ENCODE measurements at regions of chr10 and their contacts with region 1.

Region 1: GRCh38 chr10:123154092-123154921 is at the start of gene BUB3:
- DNase-seq: peak; percentile 98
- H3K4me3 Mint-ChIP-seq: peak within 1 kb of the TSS; percentile 97
- H3K27ac Mint-ChIP-seq: peak within 1 kb of the TSS; percentile 100
- H3K4me1 Mint-ChIP-seq: peaks cover 71% of the 10 kb centered on the region
- H3K27me3 Mint-ChIP-seq: peaks cover 3% of the 10 kb centered on the region
- total RNA-seq, gene BUB3: 293 to 307 TPM

Region 2: DNA sequence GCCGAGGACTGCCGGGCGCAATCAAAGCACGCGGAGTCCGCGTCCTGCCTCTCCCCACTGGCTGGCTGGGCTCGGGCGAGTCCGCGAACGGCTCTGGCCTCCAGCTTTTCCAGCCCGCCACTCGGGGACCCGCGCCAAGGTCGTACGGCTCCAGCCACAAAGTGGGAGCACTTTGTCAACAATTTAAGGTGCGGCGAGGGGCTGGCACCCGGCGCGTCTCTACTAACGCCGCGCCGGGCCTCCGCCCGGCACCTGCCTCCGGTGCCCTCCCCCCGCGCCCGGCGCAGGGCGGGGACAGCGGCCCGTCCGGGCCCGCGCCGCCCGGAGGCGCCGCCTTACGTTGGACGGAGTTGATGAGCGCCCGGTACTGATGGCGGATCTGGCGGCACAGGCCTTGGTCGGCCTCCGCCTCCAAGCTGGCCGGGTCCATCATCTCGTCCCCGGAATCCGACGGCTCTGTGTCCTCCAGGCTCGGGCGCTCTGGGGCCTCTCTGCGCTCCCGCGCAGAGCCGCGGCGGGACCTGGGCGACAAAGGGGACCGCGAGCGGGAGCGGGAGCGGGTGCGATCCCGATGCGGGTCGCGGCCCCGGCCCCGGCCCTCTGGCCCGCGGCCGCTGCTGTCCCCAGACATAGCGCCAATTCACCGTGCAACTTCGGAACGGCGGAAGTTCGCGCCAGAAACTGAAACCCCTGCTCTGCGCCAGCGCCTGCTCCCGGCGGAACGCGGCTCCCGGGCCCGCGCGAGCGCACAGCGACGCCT is 1179.6 kb before region 1 on chr10 and contains the start of gene NSMCE4A:
- CTCF ChIA-PET with region 1: no interaction called
- intact Hi-C with region 1: loop called (anchors 10 kb)
- DNase-seq: peak; percentile 76
- H3K4me3 Mint-ChIP-seq: peak within 1 kb of the TSS; percentile 76
- H3K27ac Mint-ChIP-seq: no peak within 1 kb of the TSS
- H3K4me1 Mint-ChIP-seq: peaks cover 24% of the 10 kb centered on the region
- H3K27me3 Mint-ChIP-seq: no peaks in the 10 kb centered on the region
- total RNA-seq, gene NSMCE4A: 47.5 to 48.8 TPM

Region 3: DNA sequence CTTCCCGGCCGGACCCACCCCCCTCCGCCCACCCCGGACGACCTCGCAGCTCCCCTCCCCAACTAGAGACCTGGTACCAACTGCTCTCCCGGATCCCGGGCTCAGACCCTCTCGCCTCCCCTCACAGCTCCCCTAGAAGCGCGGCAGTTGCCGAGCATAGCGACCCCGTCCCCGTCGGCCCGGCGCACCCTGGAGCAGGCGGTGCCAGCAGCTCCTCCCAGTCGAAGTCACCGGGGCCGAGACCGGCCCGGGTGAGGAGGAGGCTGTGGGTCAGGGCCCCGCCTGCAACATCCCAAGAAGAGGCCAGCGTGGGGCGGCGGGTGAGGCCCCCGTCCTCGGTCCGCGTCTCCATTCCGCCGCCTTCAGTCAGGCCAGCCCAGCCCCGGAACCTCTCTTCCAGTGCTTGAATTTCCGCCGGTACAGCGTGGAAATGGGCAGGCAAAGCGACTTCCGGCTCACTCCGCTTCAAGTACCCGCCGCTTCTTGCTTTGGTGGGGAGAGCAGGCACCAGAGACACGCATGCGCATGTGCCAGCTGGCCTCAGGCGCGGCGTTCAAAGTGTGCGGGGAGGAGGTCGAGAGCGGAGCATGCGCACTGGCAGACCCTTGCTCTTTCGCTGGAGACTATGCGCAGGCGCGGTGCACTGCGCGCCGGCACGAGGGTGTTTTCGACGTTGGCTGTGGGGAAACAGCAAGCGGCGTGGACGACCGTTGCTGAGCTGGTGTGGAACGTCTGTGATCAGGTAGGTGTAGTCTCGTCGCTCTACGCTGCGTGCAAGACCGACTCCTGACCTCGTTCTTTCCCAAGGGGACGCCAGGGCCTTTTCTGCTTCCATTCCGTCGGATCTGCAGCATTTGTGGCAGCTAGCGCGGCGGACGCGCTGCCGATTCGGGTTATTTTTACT is 200.2 kb before region 1 on chr10 and contains the start of gene C10orf88:
- CTCF ChIA-PET with region 1: no interaction called
- intact Hi-C with region 1: loop called (anchors 1 kb)
- DNase-seq: peak; percentile 97
- H3K4me3 Mint-ChIP-seq: peak within 1 kb of the TSS; percentile 81
- H3K27ac Mint-ChIP-seq: peak within 1 kb of the TSS; percentile 82
- H3K4me1 Mint-ChIP-seq: peaks cover 28% of the 10 kb centered on the region
- H3K27me3 Mint-ChIP-seq: no peaks in the 10 kb centered on the region
- total RNA-seq, gene C10orf88: 4.2 to 5.2 TPM

Region 4: GRCh38 chr10:123132576-123133477 is 21.5 kb before region 1 on chr10:
- CTCF ChIA-PET with region 1: interaction called, 18 read pairs
- intact Hi-C with region 1: loop called (anchors 1 kb)
- DNase-seq: peak; percentile 94
- H3K4me3 Mint-ChIP-seq: peak overlapping the region; percentile 44
- H3K27ac Mint-ChIP-seq: peak overlapping the region; percentile 2
- H3K4me1 Mint-ChIP-seq: peaks cover 29% of the 10 kb centered on the region
- H3K27me3 Mint-ChIP-seq: peaks cover 75% of the 10 kb centered on the region

Region 5: GRCh38 chr10:123301077-123301857 is 147.0 kb after region 1 on chr10:
- CTCF ChIA-PET with region 1: no interaction called
- intact Hi-C with region 1: no loop called
- DNase-seq: no peak
- H3K4me3 Mint-ChIP-seq: no peak overlapping the region
- H3K27ac Mint-ChIP-seq: no peak overlapping the region
- H3K4me1 Mint-ChIP-seq: no peaks in the 10 kb centered on the region
- H3K27me3 Mint-ChIP-seq: no peaks in the 10 kb centered on the region

Region 6: DNA sequence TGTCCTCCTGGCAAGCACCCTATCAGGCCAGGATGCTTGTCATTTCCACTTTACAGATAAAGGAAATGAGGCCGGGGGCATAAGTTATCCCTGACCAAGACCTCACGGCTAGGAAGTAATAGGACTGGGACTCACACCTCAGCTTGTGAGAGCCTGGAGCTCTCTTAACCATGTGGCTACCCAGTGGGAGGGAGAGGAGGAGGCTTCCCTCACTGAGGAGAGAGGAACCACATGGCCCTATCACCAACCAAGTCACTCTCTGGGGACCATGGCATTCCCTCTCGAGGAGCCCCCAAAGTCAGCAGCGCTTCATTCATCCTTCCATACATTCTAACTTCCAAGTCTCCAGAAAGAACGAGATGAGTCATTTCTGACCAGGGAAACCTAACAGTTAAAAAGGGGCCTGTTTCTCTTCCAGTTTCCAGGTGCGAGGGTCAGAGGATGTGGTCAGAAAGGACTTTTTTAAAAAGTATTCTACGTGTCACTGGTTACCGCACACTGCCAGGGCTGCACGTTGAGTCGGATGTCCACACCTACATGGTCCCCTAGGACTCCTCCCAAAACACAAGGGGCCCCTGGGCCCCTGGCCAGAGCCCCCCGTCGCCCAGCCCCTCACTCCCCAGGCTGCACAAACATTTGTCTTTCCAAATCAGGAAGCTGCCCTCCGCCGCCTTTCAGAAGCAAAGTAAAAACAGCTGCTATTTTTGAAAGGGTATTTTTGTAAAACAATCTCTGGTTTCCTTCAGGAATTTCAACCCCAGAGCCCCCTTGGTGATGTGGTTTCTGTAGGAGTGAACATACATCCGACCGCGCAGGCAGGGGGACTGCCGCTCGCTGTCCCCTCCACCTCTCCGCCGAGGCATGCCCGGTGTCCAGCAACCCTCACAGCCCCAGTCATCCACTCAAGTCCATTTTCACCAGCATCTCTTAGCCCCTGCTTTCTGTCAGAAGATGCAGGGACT is 1067.3 kb after region 1 on chr10:
- CTCF ChIA-PET with region 1: no interaction called
- intact Hi-C with region 1: loop called (anchors 5 kb)
- DNase-seq: no peak
- H3K4me3 Mint-ChIP-seq: no peak overlapping the region
- H3K27ac Mint-ChIP-seq: no peak overlapping the region
- H3K4me1 Mint-ChIP-seq: no peaks in the 10 kb centered on the region
- H3K27me3 Mint-ChIP-seq: no peaks in the 10 kb centered on the region

Region 7: DNA sequence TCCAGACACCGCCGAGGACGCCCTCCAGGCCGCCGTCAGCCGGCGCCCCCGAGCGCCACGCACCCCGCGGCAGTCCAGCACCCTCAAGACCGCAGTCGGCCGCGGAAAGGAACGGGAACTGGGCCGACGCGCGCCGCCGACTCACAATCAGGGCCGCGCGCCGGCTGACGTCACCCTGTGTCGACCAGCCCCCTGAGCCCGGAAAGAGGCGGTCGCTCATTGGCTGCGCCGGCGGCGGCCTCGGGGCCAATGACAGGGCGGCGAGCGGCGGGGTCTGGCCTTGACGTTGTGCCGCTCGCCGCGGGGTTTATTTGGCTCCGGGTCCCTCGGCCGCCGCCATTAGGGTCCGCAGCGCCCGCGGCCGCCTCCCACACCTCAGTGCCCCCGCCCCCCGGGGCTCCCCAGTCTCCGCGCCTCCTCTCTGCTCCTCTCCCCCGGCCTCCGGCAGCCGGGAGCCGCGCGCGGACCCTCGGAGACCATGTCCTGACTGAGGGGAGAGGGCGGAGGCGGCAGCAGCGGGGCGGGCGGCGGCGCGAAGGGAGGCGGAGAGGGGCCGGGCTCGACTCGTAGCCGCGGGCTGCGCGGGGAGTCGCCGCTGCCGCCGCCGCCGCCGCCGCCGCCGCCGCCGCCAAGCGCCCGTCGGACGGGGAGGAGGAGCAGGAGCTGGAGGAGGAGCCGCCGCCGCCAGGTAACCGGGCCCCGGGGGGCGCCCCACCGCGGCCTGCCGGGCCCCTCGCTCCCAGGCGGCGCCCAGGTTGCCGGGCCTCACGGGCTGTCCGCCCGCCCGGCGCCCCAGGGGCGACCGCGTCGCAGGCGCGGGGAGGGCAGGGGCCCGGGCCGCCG is 1762.5 kb after region 1 on chr10:
- CTCF ChIA-PET with region 1: no interaction called
- intact Hi-C with region 1: loop called (anchors 5 kb)
- DNase-seq: peak; percentile 97
- H3K4me3 Mint-ChIP-seq: peak overlapping the region; percentile 83
- H3K27ac Mint-ChIP-seq: peak overlapping the region; percentile 85
- H3K4me1 Mint-ChIP-seq: peaks cover 36% of the 10 kb centered on the region
- H3K27me3 Mint-ChIP-seq: no peaks in the 10 kb centered on the region